MCF 10A (cell line): ENCODE measurements at regions of chr17 and their contacts with region 1.

Region 1: DNA sequence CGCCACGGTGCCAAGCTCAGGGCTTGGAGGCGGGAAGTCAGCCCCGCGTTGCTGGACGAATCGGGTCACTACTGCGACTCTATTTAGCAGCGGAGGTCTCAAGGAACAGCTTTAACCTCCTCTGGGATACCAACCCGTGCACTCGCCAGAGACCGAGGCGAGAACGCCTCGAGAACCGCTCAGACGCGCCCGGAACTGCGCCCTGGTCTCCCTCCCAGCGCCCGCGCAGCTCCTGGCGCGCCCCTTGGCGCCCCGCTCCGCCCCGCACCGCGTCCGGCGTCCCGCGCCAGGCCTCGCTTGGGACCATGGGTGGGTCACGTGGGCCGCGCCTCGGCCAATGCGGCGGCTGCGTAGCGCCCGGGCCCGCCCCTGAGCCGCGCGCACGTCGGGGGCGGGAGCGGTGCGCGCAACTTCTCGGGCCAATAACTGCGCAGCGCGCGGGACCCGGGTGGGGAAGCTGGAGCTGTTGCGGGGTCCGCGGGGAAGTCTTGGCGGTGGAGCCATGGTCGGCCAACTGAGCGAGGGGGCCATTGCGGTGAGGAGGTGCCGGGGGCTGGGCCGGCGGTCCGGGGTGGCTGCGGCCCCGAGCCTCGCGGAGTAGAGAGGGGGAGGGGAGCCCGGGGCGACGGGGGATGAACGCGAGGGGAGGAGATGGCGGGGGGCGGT is at the starts of genes RPA1 and SMYD4:
- DNase-seq: peak; percentile 86
- H3K4me3 Mint-ChIP-seq: peak within 1 kb of the TSS; percentile 86
- H3K27ac Mint-ChIP-seq: peak within 1 kb of the TSS; percentile 85
- H3K4me1 Mint-ChIP-seq: peaks cover 25% of the 10 kb centered on the region
- H3K27me3 Mint-ChIP-seq: no peaks in the 10 kb centered on the region
- CTCF ChIP-seq: no peak
- total RNA-seq, gene RPA1: 60.3 and 62.7 TPM in 2 replicates
- total RNA-seq, gene SMYD4: 8.3 and 13.6 TPM in 2 replicates

Region 2: GRCh38 chr17:1573916-1574696 is 255.6 kb before region 1 on chr17:
- CTCF ChIA-PET with region 1: no interaction called
- POLR2A ChIA-PET with region 1: no interaction called
- intact Hi-C with region 1: no loop called
- DNase-seq: peak; percentile 87
- H3K4me3 Mint-ChIP-seq: no peak overlapping the region
- H3K27ac Mint-ChIP-seq: no peak overlapping the region
- H3K4me1 Mint-ChIP-seq: peaks cover 10% of the 10 kb centered on the region
- H3K27me3 Mint-ChIP-seq: no peaks in the 10 kb centered on the region
- CTCF ChIP-seq: peak; percentile 97

Region 3: DNA sequence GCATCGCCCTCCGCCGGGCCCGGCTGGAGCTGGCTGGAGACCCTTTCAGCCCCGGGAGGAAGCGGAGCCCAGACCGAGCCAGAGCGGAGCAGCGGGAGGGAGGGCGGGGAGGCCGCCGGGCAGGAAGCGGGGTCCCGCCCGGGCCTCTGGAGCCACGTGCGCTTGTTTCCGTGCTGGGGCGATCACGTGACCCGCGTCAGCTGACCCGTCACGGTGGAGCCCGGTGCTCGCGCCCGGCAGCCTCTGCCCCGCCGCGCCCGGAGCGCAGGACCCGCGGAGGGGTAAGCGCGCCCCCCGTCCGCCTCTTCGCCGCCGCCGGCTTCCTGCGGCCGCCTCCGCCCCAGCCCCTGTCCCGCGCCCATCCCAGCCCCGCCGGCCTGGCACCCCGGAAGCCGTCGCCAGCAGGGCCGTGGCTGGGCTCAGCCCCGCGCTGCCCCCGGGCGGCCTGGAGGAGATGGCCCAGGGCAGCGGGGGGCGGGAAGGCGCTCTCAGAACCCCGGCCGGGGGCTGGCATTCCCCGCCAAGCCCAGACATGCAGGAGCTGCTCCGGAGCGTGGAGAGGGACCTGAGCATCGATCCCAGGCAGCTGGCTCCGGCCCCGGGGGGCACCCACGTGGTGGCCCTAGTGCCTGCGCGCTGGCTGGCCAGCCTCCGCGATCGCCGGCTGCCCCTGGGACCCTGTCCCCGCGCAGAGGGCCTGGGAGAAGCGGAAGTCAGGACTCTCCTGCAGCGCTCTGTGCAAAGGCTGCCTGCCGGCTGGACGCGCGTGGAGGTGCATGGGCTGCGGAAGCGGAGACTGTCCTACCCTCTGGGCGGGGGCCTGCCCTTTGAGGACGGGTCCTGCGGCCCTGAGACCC is 105.0 kb before region 1 on chr17 and contains the start of gene WDR81:
- CTCF ChIA-PET with region 1: interaction called, 6 read pairs
- POLR2A ChIA-PET with region 1: interaction called, 20 read pairs
- intact Hi-C with region 1: no loop called
- DNase-seq: peak; percentile 69
- H3K4me3 Mint-ChIP-seq: peak within 1 kb of the TSS; percentile 65
- H3K27ac Mint-ChIP-seq: no peak within 1 kb of the TSS
- H3K4me1 Mint-ChIP-seq: peaks cover 16% of the 10 kb centered on the region
- H3K27me3 Mint-ChIP-seq: no peaks in the 10 kb centered on the region
- CTCF ChIP-seq: no peak
- total RNA-seq, gene WDR81: 17.4 and 19.4 TPM in 2 replicates

Region 4: GRCh38 chr17:1769822-1770477 is 59.8 kb before region 1 on chr17:
- CTCF ChIA-PET with region 1: interaction called, 3 read pairs
- POLR2A ChIA-PET with region 1: interaction called, 10 read pairs
- intact Hi-C with region 1: no loop called
- DNase-seq: peak; percentile 70
- H3K4me3 Mint-ChIP-seq: no peak overlapping the region
- H3K27ac Mint-ChIP-seq: peak overlapping the region; percentile 71
- H3K4me1 Mint-ChIP-seq: peaks cover 11% of the 10 kb centered on the region
- H3K27me3 Mint-ChIP-seq: no peaks in the 10 kb centered on the region
- CTCF ChIP-seq: no peak

Region 5: GRCh38 chr17:1783834-1784611 is 45.7 kb before region 1 on chr17:
- CTCF ChIA-PET with region 1: interaction called, 3 read pairs
- POLR2A ChIA-PET with region 1: interaction called, 10 read pairs
- intact Hi-C with region 1: no loop called
- DNase-seq: peak; percentile 62
- H3K4me3 Mint-ChIP-seq: no peak overlapping the region
- H3K27ac Mint-ChIP-seq: peak overlapping the region; percentile 79
- H3K4me1 Mint-ChIP-seq: peaks cover 28% of the 10 kb centered on the region
- H3K27me3 Mint-ChIP-seq: no peaks in the 10 kb centered on the region
- CTCF ChIP-seq: peak; percentile 74

Region 6: GRCh38 chr17:1793447-1793806 is 36.3 kb before region 1 on chr17:
- CTCF ChIA-PET with region 1: no interaction called
- POLR2A ChIA-PET with region 1: interaction called, 13 read pairs
- intact Hi-C with region 1: no loop called
- DNase-seq: peak; percentile 54
- H3K4me3 Mint-ChIP-seq: peak overlapping the region; percentile 31
- H3K27ac Mint-ChIP-seq: peak overlapping the region; percentile 74
- H3K4me1 Mint-ChIP-seq: peaks cover 5% of the 10 kb centered on the region
- H3K27me3 Mint-ChIP-seq: no peaks in the 10 kb centered on the region
- CTCF ChIP-seq: no peak

Region 7: DNA sequence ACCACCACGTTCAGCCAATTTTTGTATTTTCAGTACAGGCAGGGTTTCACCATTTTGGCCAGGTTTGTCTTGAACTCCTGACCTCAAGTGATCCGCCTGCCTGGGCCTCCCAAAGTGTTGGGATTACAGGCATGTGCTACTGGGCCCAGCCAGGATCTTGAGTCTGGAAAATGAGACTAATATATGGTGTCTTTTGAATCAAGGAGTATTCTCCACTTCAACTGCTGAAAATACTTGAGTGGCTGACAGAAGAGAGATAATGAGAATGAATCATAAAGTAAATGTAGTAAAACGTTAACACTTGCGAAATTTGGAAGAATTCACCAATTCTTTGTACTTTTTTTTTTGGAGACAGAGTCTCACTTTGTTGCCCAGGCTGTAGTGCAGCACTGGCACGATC is 16.6 kb before region 1 on chr17:
- CTCF ChIA-PET with region 1: interaction called, 3 read pairs
- POLR2A ChIA-PET with region 1: interaction called, 26 read pairs
- intact Hi-C with region 1: no loop called
- DNase-seq: peak; percentile 2
- H3K4me3 Mint-ChIP-seq: no peak overlapping the region
- H3K27ac Mint-ChIP-seq: no peak overlapping the region
- H3K4me1 Mint-ChIP-seq: no peaks in the 10 kb centered on the region
- H3K27me3 Mint-ChIP-seq: no peaks in the 10 kb centered on the region
- CTCF ChIP-seq: no peak

Region 8: GRCh38 chr17:2207815-2208515 is 378.2 kb after region 1 on chr17:
- CTCF ChIA-PET with region 1: no interaction called
- POLR2A ChIA-PET with region 1: no interaction called
- intact Hi-C with region 1: no loop called
- DNase-seq: no peak
- H3K4me3 Mint-ChIP-seq: no peak overlapping the region
- H3K27ac Mint-ChIP-seq: no peak overlapping the region
- H3K4me1 Mint-ChIP-seq: peaks cover 7% of the 10 kb centered on the region
- H3K27me3 Mint-ChIP-seq: no peaks in the 10 kb centered on the region
- CTCF ChIP-seq: no peak